ENCODE measurements at regions of chr4 and their contacts with region 1.

Region 1: GRCh38 chr4:53189011-53189410 is 176.8 kb downstream of the SCFD2 start:
- DNase-seq: no peak
- H3K4me3 ChIP-seq: no peak overlapping the region
- H3K4me3 Mint-ChIP-seq: no peak overlapping the region
- H3K27ac Mint-ChIP-seq: no peak overlapping the region
- H3K4me1 ChIP-seq: peaks cover 30% of the 10 kb centered on the region
- H3K4me1 Mint-ChIP-seq: peaks cover 20% of the 10 kb centered on the region
- H3K27me3 ChIP-seq: no peaks in the 10 kb centered on the region
- H3K27me3 Mint-ChIP-seq: no peaks in the 10 kb centered on the region
- CTCF ChIP-seq: no peak

Region 2: DNA sequence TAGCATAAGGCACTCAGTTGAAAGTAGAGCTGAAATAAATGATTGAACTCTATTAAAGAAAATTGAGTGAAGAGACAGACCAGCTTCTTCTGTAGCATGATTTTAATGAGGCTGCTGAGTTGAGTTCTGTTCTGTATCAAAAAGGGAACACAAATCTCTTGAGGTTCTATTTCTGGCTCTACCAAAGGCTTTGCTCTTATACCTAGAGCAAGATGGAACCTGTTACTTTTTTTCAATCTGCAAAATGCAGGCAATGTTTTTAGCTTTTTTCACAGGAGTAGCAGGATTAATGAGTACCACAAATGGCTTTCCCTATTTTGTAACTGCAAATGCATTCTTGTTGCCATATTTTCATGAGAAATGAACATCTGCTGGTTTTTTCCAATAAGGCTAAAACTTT is 433.6 kb before region 1 on chr4:
- CTCF ChIA-PET with region 1: no interaction called
- POLR2A ChIA-PET with region 1: no interaction called
- intact Hi-C with region 1: no loop called
- DNase-seq: no peak
- H3K4me3 ChIP-seq: no peak overlapping the region
- H3K4me3 Mint-ChIP-seq: no peak overlapping the region
- H3K27ac Mint-ChIP-seq: no peak overlapping the region
- H3K4me1 ChIP-seq: no peaks in the 10 kb centered on the region
- H3K4me1 Mint-ChIP-seq: no peaks in the 10 kb centered on the region
- H3K27me3 ChIP-seq: no peaks in the 10 kb centered on the region
- H3K27me3 Mint-ChIP-seq: no peaks in the 10 kb centered on the region
- CTCF ChIP-seq: no peak

Region 3: DNA sequence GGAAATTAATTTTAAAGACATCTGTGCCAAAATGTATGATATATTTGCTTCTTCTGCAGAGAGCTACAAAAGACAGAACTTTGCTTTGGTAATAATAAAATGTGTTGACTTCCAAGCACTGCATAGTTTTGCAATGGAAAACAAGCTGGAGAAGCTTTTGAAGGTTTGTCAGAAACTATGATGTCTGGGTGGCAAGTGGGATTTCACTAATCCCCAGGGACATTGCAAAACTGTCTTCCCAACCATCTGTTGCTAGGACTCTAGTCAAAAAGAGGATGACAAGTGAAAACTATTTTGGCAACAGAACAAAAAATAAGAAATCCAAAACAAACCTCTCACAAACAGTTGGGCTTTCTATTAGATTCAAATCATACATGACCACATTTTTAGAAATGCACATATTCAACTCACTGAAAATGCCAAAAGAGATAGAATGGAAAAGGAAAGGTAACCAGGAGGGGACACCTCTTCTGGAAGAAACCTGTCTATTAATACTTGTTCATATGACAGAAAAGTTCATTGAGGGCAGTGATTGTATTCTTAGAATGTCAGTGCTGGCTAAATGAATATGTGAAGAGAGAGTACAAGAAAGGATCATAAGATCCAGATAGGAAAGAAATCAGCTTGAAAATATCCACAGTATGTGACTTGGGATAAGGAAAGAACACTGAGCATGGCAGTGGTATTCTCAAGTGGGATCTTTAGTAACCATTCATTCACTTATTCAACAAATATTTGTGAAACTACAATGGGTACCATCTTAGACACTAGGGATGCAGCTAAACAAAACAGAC is 98.9 kb before region 1 on chr4:
- CTCF ChIA-PET with region 1: no interaction called
- POLR2A ChIA-PET with region 1: no interaction called
- intact Hi-C with region 1: loop called (anchors 10 kb)
- DNase-seq: no peak
- H3K4me3 ChIP-seq: no peak overlapping the region
- H3K4me3 Mint-ChIP-seq: no peak overlapping the region
- H3K27ac Mint-ChIP-seq: no peak overlapping the region
- H3K4me1 ChIP-seq: no peaks in the 10 kb centered on the region
- H3K4me1 Mint-ChIP-seq: no peaks in the 10 kb centered on the region
- H3K27me3 ChIP-seq: no peaks in the 10 kb centered on the region
- H3K27me3 Mint-ChIP-seq: no peaks in the 10 kb centered on the region
- CTCF ChIP-seq: no peak

Region 4: GRCh38 chr4:53459548-53459947 is 270.5 kb after region 1 on chr4:
- CTCF ChIA-PET with region 1: no interaction called
- POLR2A ChIA-PET with region 1: no interaction called
- intact Hi-C with region 1: loop called (anchors 5 kb)
- DNase-seq: peak; percentile 59 to 60
- H3K4me3 ChIP-seq: no peak overlapping the region
- H3K4me3 Mint-ChIP-seq: peak overlapping the region; percentile 34
- H3K27ac Mint-ChIP-seq: peak overlapping the region; percentile 75
- H3K4me1 ChIP-seq: peaks cover 50% of the 10 kb centered on the region
- H3K4me1 Mint-ChIP-seq: peaks cover 20% of the 10 kb centered on the region
- H3K27me3 ChIP-seq: no peaks in the 10 kb centered on the region
- H3K27me3 Mint-ChIP-seq: no peaks in the 10 kb centered on the region
- CTCF ChIP-seq: no peak

Region 5: GRCh38 chr4:53551958-53552357 is 362.9 kb after region 1 on chr4:
- CTCF ChIA-PET with region 1: no interaction called
- POLR2A ChIA-PET with region 1: no interaction called
- intact Hi-C with region 1: no loop called
- DNase-seq: no peak
- H3K4me3 ChIP-seq: no peak overlapping the region
- H3K4me3 Mint-ChIP-seq: no peak overlapping the region
- H3K27ac Mint-ChIP-seq: no peak overlapping the region
- H3K4me1 ChIP-seq: no peaks in the 10 kb centered on the region
- H3K4me1 Mint-ChIP-seq: no peaks in the 10 kb centered on the region
- H3K27me3 ChIP-seq: no peaks in the 10 kb centered on the region
- H3K27me3 Mint-ChIP-seq: no peaks in the 10 kb centered on the region
- CTCF ChIP-seq: no peak

Measured in Caco-2 (cell line).